Colonic mucosa (tissue), 4 donors: ENCODE measurements at regions of chr3 and their contacts with region 1.

Region 1: GRCh38 chr3:36814776-36815175 is 50.4 kb upstream of the DCLK3 start:
- DNase-seq: no peak
- H3K4me3 ChIP-seq: no peak overlapping the region
- H3K27ac ChIP-seq: no peak overlapping the region
- H3K4me1 ChIP-seq: no peaks in the 10 kb centered on the region
- H3K27me3 ChIP-seq: no peaks in the 10 kb centered on the region
- CTCF ChIP-seq: no peak

Region 2: GRCh38 chr3:36477655-36478054 is 337.1 kb before region 1 on chr3:
- intact Hi-C with region 1: no loop called
- DNase-seq: no peak
- H3K4me3 ChIP-seq: no peak overlapping the region
- H3K27ac ChIP-seq: no peak overlapping the region
- H3K4me1 ChIP-seq: no peaks in the 10 kb centered on the region
- H3K27me3 ChIP-seq: no peaks in the 10 kb centered on the region
- CTCF ChIP-seq: no peak

Region 3: DNA sequence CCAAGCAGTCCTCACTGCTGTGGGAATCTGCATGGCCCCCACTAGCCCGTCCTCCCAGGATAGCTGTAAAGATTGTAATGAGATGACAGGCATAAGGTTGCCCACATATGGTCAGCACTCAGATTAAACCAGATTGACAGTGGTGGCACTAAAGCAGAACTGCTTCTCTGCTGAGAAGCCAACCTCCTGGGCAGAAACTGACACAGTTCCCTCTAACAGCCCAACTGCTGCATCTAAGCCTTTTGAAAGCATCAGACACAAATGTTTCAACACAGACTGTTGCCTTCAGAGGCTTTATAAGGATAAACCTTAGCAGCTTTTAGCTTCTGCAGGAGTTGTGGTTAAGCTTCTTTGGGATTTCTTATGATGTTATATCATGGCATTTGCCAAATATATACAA is 63.5 kb before region 1 on chr3:
- intact Hi-C with region 1: no loop called
- DNase-seq: no peak
- H3K4me3 ChIP-seq: no peak overlapping the region
- H3K27ac ChIP-seq: no peak overlapping the region
- H3K4me1 ChIP-seq: no peaks in the 10 kb centered on the region
- H3K27me3 ChIP-seq: no peaks in the 10 kb centered on the region
- CTCF ChIP-seq: no peak

Region 4: DNA sequence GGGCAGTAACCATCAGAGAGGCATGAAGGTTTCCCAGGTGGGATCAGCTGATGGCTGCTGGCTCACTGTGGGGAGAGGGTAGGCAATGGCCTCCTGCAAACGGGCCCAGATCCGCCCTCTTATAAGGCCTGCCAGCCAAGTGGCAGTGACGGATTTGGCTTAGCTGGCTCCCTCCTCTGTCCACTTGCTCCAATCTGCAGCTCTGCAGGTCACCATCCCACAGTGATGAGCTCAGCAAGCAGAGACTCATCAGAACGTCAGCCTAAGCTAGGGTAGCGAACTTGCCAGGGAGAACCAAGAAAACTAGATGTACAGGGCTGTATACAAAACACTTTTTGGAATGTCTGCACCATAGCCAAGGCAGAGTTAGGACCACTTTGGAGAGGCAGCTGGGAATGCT is 12.4 kb after region 1 on chr3:
- intact Hi-C with region 1: loop called (anchors 2 kb)
- DNase-seq: no peak
- H3K4me3 ChIP-seq: no peak overlapping the region
- H3K27ac ChIP-seq: no peak overlapping the region
- H3K4me1 ChIP-seq: no peaks in the 10 kb centered on the region
- H3K27me3 ChIP-seq: no peaks in the 10 kb centered on the region
- CTCF ChIP-seq: no peak